Sciatic nerve (tissue), 2 donors: ENCODE measurements at regions of chr15 and their contacts with region 1.

Region 1: GRCh38 chr15:56040081-56041035 is 46.9 kb upstream of the NEDD4 start:
- DNase-seq: peak; percentile 66
- ATAC-seq: peak; percentile 91

Region 2: DNA sequence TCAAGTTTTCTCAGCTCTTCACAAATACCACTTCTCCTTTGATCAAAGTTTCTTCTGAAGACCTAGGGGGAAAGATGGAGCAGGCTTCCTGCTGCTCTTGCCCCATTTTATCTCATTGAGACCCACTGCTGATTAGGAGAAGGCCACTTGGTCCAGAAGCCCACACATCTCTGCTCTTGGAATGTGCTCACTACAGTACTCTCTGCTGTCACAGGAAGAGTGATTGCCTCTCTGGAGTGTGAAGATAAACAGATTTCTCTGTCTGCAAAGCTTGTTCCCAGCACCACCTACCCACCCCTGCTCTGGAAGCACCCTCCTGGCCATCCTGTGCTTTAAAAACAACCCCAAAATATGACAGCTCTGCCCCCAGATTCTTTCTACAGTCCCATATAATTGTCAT is 256.1 kb before region 1 on chr15:
- intact Hi-C with region 1: no loop called
- DNase-seq: no peak
- ATAC-seq: no peak

Region 3: DNA sequence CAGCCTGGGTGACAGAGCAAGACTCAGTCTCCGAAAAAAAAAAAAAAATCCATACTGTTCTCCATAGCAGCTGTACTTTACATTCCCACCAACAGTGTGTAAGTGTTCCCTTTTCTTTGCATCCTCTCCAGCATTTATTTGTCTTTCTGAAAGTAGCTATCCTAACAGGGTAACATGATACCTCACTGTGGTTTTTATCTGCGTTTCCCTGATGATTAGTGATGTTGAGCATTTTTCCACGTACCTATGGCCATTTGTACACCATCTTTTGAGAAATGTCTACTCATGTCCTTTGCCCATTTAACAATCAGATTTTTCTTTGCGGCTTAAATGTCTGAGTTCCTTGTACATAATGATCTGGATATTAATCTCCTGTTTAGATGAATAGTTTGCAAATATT is 84.0 kb after region 1 on chr15:
- intact Hi-C with region 1: loop called (anchors 5 kb)
- DNase-seq: no peak
- ATAC-seq: no peak

Region 4: DNA sequence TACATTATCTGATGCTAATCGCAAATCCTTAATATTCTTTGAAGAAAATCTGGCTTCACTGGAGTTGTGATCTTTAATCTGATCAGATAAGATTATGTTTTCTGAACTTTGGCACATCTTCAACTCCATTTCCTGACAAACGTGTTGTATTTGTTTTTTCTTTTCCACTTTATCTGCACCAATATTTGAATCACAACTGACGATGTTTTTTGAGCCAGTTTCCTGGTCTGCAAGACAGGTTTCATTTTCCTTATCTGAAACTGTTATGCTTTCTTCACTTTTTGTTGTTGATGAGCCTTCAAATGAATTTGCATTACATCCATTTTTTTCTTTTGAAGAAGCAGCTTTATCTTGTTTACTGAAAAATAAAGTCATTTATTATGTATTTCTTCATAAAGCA is 591.4 kb after region 1 on chr15:
- intact Hi-C with region 1: no loop called
- DNase-seq: no peak
- ATAC-seq: no peak